Adrenal gland (tissue), 19 donors: ENCODE measurements at regions of chr20 and their contacts with region 1.

Region 1: GRCh38 chr20:25984933-25985332 is 288.3 kb upstream of the ZNF337 start:
- DNase-seq: peak in 6 of 7 donors; percentile 27 to 74 (median 58)
- H3K4me3 ChIP-seq: peak overlapping the region in 1 of 4 donors; percentile 45
- H3K27ac ChIP-seq: no peak overlapping the region
- H3K4me1 ChIP-seq: no peaks in the 10 kb centered on the region
- H3K27me3 ChIP-seq: no peaks in the 10 kb centered on the region
- CTCF ChIP-seq: no peak
- POLR2A ChIP-seq: no peak

Region 2: GRCh38 chr20:25865380-25866118 is 119.4 kb before region 1 on chr20:
- intact Hi-C with region 1: loop called in 1 of 2 experiments (anchors 5 kb)
- DNase-seq: peak; percentile 81 to 89 (median 82)
- H3K4me3 ChIP-seq: peak overlapping the region in 1 of 4 donors; percentile 45
- H3K27ac ChIP-seq: no peak overlapping the region
- H3K4me1 ChIP-seq: peaks cover 11 to 25% of the 10 kb centered on the region in 2 donors
- H3K27me3 ChIP-seq: no peaks in the 10 kb centered on the region
- CTCF ChIP-seq: no peak
- POLR2A ChIP-seq: no peak

Region 3: GRCh38 chr20:26135325-26136110 is 150.6 kb after region 1 on chr20:
- intact Hi-C with region 1: no loop called
- DNase-seq: no peak
- H3K4me3 ChIP-seq: no peak overlapping the region
- H3K27ac ChIP-seq: no peak overlapping the region
- H3K4me1 ChIP-seq: no peaks in the 10 kb centered on the region
- H3K27me3 ChIP-seq: no peaks in the 10 kb centered on the region
- CTCF ChIP-seq: no peak
- POLR2A ChIP-seq: no peak